Tibial artery (tissue), 4 donors: ENCODE measurements at regions of chr12 and their contacts with region 1.

Region 1: DNA sequence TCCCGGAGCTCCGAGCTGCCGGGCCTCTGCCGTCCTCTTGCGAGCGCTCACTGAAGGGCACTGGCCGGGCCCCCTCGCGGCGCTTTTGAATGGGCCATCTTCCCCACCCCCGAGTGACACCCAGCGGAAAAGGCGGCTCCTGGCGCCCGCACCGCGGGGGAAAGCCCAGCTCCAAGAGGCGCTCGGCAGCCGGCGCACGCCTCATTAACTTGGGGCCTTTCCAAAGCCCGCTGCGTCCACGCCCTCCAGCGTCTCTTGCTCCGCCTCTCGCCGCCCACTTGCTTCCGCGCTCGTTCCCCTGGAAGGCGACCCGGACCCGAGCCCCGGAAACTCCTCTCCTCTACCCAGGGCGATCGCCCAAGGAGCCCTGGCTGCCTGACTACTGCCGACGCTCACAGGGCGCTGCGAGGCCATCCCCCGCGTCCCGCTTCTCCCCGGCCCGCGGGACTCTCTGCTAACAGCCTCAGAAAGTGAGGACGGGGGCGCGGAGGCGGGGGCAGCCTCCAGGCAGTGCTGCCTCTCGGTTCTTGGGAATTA is at the start of gene PHLDA1:
- DNase-seq: peak; percentile 89 to 96
- H3K4me3 ChIP-seq: peak within 1 kb of the TSS; percentile 82 to 83
- H3K27ac ChIP-seq: peak within 1 kb of the TSS; percentile 96 to 99
- H3K4me1 ChIP-seq: peaks cover 0 to 21% (median 7%) of the 10 kb centered on the region in 4 donors
- H3K27me3 ChIP-seq: no peaks in the 10 kb centered on the region
- CTCF ChIP-seq: peak; percentile 57 to 63

Region 2: GRCh38 chr12:75511116-75512048 is 520.2 kb before region 1 on chr12 and contains the start of gene KRR1:
- intact Hi-C with region 1: loop called (anchors 5 kb)
- DNase-seq: peak; percentile 90 to 96
- H3K4me3 ChIP-seq: peak within 1 kb of the TSS; percentile 66 to 84
- H3K27ac ChIP-seq: peak within 1 kb of the TSS; percentile 64 to 82
- H3K4me1 ChIP-seq: peaks cover 0 to 34% (median 14%) of the 10 kb centered on the region in 4 donors
- H3K27me3 ChIP-seq: no peaks in the 10 kb centered on the region
- CTCF ChIP-seq: peak in 1 of 2 experiments; percentile 32

Region 3: GRCh38 chr12:75981247-75982168 is 50.1 kb before region 1 on chr12:
- intact Hi-C with region 1: loop called (anchors 5 kb)
- DNase-seq: no peak
- H3K4me3 ChIP-seq: peak overlapping the region; percentile 40 to 47
- H3K27ac ChIP-seq: peak overlapping the region in 1 of 2 donors; percentile 64
- H3K4me1 ChIP-seq: peaks cover 0 to 53% (median 29%) of the 10 kb centered on the region in 4 donors
- H3K27me3 ChIP-seq: no peaks in the 10 kb centered on the region
- CTCF ChIP-seq: no peak

Region 4: DNA sequence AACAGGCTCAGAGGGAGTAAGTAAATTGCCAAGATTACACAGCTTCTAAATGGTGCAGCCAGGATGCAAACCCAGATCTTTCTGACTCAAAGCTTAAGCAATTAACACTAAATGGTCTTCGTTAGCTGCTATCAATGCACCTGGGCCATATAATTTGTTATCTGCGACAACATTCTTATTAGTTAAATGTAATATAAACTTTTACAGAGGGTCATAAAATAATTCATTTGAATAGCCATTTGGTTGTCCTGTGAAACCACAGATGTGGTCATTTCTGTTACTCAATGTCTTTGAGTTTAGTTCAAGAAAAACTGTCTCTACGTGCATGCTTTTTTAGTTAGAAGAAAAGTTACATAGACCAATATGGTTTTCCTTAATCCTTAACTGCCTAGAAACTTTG is 75.0 kb after region 1 on chr12:
- intact Hi-C with region 1: no loop called
- DNase-seq: no peak
- H3K4me3 ChIP-seq: no peak overlapping the region
- H3K27ac ChIP-seq: no peak overlapping the region
- H3K4me1 ChIP-seq: no peaks in the 10 kb centered on the region
- H3K27me3 ChIP-seq: no peaks in the 10 kb centered on the region
- CTCF ChIP-seq: no peak

Region 5: DNA sequence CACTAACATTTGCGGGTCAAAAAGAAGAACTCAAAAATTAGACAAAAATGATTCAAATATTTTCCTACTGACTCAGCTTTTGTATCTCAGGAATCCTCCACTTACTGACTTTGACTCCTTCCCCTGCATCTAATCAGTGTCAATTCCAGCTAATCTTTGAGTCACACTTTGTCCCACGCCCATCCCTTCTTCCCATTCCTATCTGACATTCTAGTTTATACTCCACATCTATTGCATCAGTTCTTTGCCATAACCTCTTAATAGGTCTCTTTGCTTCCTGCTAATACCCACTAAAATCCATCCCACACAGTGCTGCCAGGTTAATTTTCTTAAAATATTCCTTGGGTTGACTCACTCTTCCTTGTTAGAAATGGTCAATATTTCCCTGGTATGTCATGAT is 297.6 kb after region 1 on chr12:
- intact Hi-C with region 1: no loop called
- DNase-seq: no peak
- H3K4me3 ChIP-seq: no peak overlapping the region
- H3K27ac ChIP-seq: no peak overlapping the region
- H3K4me1 ChIP-seq: no peaks in the 10 kb centered on the region
- H3K27me3 ChIP-seq: no peaks in the 10 kb centered on the region
- CTCF ChIP-seq: no peak